ENCODE measurements at regions of chr1 and their contacts with region 1.

Region 1: DNA sequence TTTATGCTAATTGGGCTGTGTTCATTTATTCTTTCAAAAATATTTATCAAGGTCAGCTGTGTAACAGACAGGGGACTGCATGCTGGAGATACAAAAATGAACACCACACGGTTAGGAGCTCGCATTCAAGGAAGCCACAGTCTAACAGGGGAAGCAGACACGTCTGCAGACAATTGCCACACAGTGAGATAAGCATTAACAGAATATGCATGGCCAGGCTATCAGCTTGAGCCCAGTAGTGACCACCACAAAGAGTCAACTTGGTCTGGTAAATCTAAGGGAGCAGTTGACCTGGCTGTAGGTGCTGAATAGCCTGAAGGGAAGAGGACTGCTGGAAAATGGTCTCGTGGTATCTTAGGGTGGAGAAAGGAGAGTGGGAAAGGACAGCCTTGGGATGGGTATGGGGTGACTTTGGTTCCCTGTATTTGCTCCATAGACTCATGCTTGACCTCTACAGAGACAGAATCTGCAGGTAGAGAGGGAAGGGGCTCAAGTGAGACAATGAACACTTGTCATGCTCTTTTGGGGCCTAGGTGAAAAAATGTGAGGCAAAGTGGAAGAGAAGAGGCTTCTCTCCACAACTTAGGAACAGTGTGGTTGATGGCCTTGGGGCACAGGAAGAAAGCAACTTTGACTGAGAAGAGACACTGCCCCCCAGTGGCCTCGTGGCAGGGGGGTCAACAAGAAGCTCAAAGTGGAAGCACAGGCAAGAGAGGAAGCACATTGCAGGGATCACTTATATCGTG is 7.6 kb upstream of the NPL start:
- DNase-seq: peak; percentile 86
- ATAC-seq: peak; percentile 72
- H3K4me3 Mint-ChIP-seq: no peak overlapping the region
- H3K27ac Mint-ChIP-seq: no peak overlapping the region
- H3K4me1 Mint-ChIP-seq: peaks cover 15% of the 10 kb centered on the region
- H3K27me3 Mint-ChIP-seq: peaks cover 9% of the 10 kb centered on the region
- CTCF ChIP-seq: peak; percentile 72

Region 2: DNA sequence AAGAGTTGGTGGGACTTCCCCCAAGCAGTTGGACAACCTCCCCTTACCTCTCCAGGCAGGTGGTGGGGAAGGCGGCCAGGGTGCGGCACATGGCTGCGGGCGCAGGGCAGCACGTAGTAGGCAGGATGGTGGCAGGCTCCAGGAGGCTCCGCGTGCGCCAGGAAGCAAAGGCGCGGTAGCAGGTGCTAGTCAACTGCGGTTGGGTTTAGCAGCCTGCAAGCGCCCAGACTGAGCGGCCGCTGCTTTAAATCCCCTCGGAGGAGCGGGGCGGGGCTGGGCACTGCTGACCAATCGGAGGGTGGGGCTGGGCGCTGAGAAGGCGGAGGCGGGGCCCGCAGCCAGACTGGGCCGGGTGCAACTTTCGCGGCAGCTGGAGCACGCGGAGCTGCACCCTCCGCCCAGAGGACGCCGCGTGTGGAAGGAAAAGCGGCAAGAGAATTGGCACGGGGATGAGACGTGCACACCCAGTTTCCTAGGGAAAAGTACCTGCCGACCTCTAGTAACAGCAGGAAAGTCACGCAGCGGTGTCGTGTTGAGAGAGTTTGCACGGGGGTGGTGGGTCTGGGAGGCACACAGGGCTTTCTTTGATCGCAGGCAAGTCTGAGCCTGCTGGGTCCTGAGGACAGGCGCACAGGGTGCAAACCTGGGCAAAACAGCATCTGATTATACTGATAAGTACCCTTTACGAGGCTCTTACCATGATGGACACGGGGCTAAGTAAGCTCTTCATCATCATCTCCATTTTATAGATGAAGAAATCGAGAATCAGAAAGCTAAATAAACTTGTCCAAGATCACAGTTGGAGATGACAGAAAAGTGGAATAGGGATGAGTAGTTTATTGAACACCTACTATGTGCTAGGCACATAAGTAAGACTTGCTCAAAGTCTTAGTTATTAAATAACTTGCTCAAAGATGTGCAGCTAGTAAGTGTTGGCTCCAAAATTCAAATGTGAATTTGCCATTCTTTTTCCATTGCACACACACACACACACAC is 177.5 kb before region 1 on chr1 and contains the start of gene RGS16:
- CTCF ChIA-PET with region 1: interaction called, 1,003 read pairs
- POLR2A ChIA-PET with region 1: interaction called, 12 read pairs
- intact Hi-C with region 1: loop called (anchors 1 kb)
- DNase-seq: peak; percentile 97
- ATAC-seq: peak; percentile 93
- H3K4me3 Mint-ChIP-seq: peak within 1 kb of the TSS; percentile 2
- H3K27ac Mint-ChIP-seq: no peak within 1 kb of the TSS
- H3K4me1 Mint-ChIP-seq: peaks cover 41% of the 10 kb centered on the region
- H3K27me3 Mint-ChIP-seq: peaks cover 29% of the 10 kb centered on the region
- CTCF ChIP-seq: no peak
- total RNA-seq, gene RGS16: 33.8 to 35.6 TPM

Region 3: DNA sequence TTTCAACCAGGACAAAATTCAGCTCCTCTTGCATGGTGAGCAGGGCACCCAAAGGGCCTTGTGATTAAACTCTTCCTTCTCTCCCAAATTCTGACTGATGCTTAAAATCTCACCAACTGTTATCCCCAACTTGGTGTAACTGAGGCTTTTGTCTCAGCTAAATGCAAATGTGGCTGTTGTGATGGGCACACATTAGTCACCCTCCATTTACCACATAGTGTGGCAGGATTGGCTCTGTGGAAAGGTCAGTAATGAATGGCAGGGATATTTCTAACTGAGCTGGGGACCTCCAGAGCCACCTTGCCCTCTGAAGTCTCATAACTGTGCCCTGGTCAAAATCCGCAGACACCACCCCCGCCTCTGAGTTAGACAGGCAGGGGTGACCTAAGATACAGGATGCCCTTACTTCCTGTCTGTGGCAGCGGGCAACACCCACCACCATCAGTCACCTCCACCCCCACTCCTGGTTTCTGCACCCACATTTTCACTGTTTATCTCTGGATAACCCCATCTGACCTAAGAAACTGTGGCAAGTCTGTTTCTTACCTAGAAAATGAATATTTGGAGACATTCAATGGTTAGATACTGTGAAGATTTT is 152.4 kb before region 1 on chr1:
- CTCF ChIA-PET with region 1: interaction called, 11 read pairs
- POLR2A ChIA-PET with region 1: interaction called, 3 read pairs
- intact Hi-C with region 1: no loop called
- DNase-seq: peak; percentile 93
- ATAC-seq: peak; percentile 95
- H3K4me3 Mint-ChIP-seq: no peak overlapping the region
- H3K27ac Mint-ChIP-seq: peak overlapping the region; percentile 22
- H3K4me1 Mint-ChIP-seq: peaks cover 56% of the 10 kb centered on the region
- H3K27me3 Mint-ChIP-seq: peaks cover 17% of the 10 kb centered on the region
- CTCF ChIP-seq: no peak

Region 4: DNA sequence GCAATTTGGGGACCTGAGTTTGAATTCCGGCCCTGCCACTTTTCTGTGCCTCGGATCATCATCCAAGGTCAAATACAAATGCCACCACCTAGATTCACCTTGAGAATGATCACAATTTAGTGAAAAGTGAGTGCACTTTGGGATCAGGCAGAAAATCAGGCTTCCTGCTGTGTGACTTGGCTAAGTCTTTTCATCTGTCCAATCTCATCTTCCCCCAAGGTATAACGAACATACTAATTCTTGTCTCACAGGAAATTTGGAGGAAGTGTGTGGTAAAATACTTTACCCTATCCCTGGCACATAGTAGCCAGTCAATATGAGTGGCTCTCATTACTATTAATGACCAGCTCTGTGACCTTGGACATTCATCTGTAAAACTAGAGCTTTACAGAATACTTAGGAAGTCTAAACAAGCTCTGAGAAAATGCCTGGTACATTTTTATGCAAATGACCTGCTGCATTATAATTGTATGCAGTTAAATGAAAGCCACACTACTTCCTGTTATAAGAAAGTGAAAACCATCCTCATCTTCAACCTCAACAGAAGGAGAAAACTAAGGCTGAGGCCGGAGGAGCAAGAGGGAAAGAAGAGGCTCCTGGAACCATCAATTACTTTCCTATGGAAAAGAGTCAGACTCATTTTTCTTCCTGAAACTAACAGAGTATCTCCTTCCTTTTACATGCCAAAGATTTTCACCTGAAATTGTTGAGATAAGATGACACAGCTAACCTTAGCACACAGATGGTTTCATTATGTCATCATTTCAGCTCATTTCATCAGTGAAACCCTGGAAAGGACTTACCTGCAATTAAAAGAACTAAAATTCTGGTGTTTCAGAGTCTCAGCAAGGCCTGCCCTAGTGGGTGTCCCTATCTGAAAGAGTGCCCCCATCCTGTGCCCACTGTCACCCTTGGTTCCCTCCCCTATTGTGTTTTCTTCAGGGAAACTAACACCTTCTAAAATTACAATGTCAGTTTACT is 65.0 kb before region 1 on chr1:
- CTCF ChIA-PET with region 1: interaction called, 18 read pairs
- POLR2A ChIA-PET with region 1: interaction called, 3 read pairs
- intact Hi-C with region 1: loop called (anchors 5 kb)
- DNase-seq: peak; percentile 11
- ATAC-seq: peak; percentile 24
- H3K4me3 Mint-ChIP-seq: no peak overlapping the region
- H3K27ac Mint-ChIP-seq: peak overlapping the region; percentile 61
- H3K4me1 Mint-ChIP-seq: peaks cover 55% of the 10 kb centered on the region
- H3K27me3 Mint-ChIP-seq: peaks cover 3% of the 10 kb centered on the region
- CTCF ChIP-seq: no peak

Region 5: DNA sequence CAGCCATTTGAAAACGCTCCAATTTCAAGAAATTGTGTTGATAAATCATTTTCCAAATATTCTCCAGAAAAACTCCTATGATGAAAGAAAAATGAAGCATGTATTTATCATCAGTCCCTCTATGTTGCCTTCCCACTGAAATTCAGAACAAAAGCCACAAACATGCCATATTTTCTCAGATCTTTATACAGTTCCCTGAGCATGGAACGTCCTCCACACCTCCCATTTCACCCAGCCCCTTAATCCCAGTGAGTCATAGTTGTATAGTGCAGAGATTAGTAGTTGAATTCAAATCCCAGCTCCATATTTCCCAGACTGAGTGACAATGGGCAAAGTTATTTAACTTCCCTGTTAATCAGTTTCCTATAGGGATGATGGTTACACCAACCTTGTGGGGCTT is 13.1 kb before region 1 on chr1:
- CTCF ChIA-PET with region 1: interaction called, 47 read pairs
- POLR2A ChIA-PET with region 1: no interaction called
- intact Hi-C with region 1: no loop called
- DNase-seq: no peak
- ATAC-seq: no peak
- H3K4me3 Mint-ChIP-seq: no peak overlapping the region
- H3K27ac Mint-ChIP-seq: no peak overlapping the region
- H3K4me1 Mint-ChIP-seq: no peaks in the 10 kb centered on the region
- H3K27me3 Mint-ChIP-seq: peaks cover 21% of the 10 kb centered on the region
- CTCF ChIP-seq: no peak

Region 6: GRCh38 chr1:182802006-182802803 is 20.2 kb after region 1 on chr1:
- CTCF ChIA-PET with region 1: no interaction called
- POLR2A ChIA-PET with region 1: no interaction called
- intact Hi-C with region 1: no loop called
- DNase-seq: no peak
- ATAC-seq: no peak
- H3K4me3 Mint-ChIP-seq: no peak overlapping the region
- H3K27ac Mint-ChIP-seq: no peak overlapping the region
- H3K4me1 Mint-ChIP-seq: no peaks in the 10 kb centered on the region
- H3K27me3 Mint-ChIP-seq: no peaks in the 10 kb centered on the region
- CTCF ChIP-seq: no peak